ENCODE measurements at regions of chr22 and their contacts with region 1.

Region 1: DNA sequence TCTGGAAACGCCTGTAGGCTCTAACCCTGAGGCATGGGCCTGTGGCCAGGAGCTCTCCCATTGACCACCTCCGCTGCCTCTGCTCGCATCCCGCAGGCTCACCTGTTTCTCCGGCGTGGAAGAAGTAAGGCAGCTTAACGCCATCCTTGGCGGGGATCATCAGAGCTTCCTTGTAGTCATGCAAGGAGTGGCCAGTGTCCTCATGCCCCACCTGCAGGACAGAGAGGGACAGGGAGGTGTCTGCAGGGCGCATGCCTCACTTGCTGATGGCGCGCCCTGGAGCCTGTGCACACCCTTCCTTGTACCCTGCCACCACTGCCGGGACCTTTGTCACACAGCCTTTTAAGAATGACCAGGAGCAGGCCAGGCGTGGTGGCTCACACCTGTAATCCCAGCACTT is 29.2 kb upstream of the HDHD5 start:
- ATAC-seq: no peak
- H3K4me3 ChIP-seq: no peak overlapping the region
- H3K27ac ChIP-seq: no peak overlapping the region
- H3K4me1 ChIP-seq: no peaks in the 10 kb centered on the region

Region 2: GRCh38 chr22:17077255-17077654 is 111.0 kb before region 1 on chr22:
- in situ Hi-C with region 1: loop called in 1 of 9 experiments (anchors 10 kb)
- ATAC-seq: no peak
- H3K4me3 ChIP-seq: no peak overlapping the region
- H3K27ac ChIP-seq: no peak overlapping the region
- H3K4me1 ChIP-seq: no peaks in the 10 kb centered on the region

Region 3: GRCh38 chr22:17597217-17597616 is 409.0 kb after region 1 on chr22:
- in situ Hi-C with region 1: no loop called
- ATAC-seq: no peak
- H3K4me3 ChIP-seq: no peak overlapping the region
- H3K27ac ChIP-seq: no peak overlapping the region
- H3K4me1 ChIP-seq: no peaks in the 10 kb centered on the region

Measured in motor neuron (in vitro differentiated cells).